Activated CD8-positive, alpha-beta T cell treated with anti-CD3 and anti-CD28 coated beads for 36 hours (primary cell): ENCODE measurements at regions of chr7 and their contacts with region 1.

Region 1: DNA sequence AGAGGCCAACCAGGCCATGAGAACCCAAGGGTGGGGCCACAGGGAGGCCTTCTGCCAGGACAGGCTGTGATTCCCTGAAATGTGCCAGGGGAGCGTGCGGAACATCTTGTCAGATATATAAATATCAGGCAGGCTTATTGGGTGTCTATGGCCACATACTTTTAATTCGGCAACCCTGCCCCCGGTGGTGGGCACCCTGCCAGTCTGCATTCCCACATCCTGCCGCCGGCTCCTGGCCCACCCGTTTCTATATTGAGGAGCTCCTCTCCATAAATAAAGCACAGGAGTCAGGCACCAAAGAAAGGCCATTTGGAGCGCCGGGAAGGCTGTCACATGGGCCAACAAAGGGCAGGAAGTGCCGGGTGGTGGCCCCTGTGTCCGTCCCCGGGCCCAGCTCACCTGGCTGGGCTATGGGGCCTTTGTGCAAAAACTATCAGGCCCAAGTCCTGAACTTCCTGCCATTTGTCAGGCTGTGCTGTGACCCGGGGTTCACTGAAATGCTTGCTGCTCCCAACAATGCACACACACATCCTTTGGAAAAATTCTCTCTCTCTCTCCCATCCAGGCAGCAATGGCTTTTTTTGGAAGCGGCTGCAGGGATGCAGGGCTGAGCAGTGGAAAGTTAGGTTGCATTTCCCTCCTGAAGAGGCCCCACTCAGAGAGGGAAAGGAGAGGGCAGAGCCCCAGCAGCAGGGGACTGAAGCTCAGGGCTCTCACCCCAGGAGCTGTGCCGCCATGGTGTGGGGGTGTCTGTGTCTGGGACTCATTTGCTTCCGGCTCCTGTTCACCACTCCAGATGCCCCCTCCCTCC is 25.0 kb upstream of the PODXL start:
- DNase-seq: no peak
- ATAC-seq: no peak
- H3K4me3 Mint-ChIP-seq: no peak overlapping the region
- H3K27ac Mint-ChIP-seq: no peak overlapping the region
- H3K4me1 Mint-ChIP-seq: no peaks in the 10 kb centered on the region
- H3K27me3 Mint-ChIP-seq: peaks cover 2% of the 10 kb centered on the region
- CTCF ChIP-seq: no peak

Region 2: DNA sequence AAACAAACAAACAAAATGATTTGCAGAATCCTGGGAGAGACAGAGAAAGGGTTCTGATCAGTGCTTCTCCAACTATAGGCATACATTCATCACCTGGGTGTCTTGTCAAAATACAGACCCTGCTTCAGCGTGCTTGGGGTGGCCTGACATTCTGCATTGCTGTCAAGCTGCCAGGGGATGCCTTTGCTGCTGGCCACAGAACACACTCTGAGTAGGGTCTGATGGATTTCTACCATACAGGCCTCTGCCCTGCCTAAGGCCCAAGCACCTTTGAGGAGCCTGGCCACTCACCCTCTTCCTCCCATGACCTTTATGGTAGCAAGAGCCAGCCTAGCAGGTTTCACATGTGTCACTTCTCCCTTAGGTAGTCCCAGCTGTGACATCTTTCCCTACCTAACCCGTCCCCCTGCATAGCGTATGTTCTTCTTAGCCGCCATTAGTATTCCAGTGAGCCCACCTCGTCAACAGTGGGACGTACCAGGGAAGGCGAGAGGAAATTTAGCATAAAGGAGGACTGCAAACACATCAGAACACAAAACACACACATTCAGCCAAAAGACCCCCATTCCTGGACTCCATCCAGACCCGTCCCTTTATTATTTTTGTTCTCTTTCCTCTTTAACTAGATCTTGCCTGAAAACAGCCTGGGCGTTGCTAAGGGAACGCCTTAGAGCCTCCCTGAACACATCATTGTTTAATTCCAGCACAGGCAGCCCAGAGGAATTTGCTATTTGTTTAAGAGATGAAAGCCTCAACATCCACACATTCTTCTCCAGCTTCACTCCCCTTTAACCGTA is 18.8 kb after region 1 on chr7:
- CTCF ChIA-PET with region 1: no interaction called
- POLR2A ChIA-PET with region 1: interaction called, 5 read pairs
- intact Hi-C with region 1: loop called (anchors 2 kb)
- DNase-seq: no peak
- ATAC-seq: no peak
- H3K4me3 Mint-ChIP-seq: no peak overlapping the region
- H3K27ac Mint-ChIP-seq: no peak overlapping the region
- H3K4me1 Mint-ChIP-seq: no peaks in the 10 kb centered on the region
- H3K27me3 Mint-ChIP-seq: peaks cover 7% of the 10 kb centered on the region
- CTCF ChIP-seq: no peak